ENCODE measurements at regions of chr7 and their contacts with region 1.

Region 1: GRCh38 chr7:55572378-55573233 is at the start of gene VOPP1:
- DNase-seq: peak in 4 of 10 donors; percentile 35 to 74 (median 61)
- H3K4me3 ChIP-seq: peak within 1 kb of the TSS; percentile 70 to 95 (median 87)
- H3K27ac ChIP-seq: peak within 1 kb of the TSS; percentile 45 to 94 (median 86)
- H3K27me3 ChIP-seq: no peaks in the 10 kb centered on the region
- CTCF ChIP-seq: peak in 1 of 56 donors; percentile 7
- total RNA-seq, gene VOPP1: 43.2 to 95.6 (median 64.3) TPM

Region 2: GRCh38 chr7:55360486-55360885 is 212.1 kb before region 1 on chr7:
- intact Hi-C with region 1: loop called in 1 of 2 experiments (anchors 5 kb)
- DNase-seq: no peak
- H3K4me3 ChIP-seq: no peak overlapping the region
- H3K27ac ChIP-seq: no peak overlapping the region
- H3K27me3 ChIP-seq: no peaks in the 10 kb centered on the region
- CTCF ChIP-seq: no peak

Region 3: GRCh38 chr7:55432939-55433784 is 139.4 kb before region 1 on chr7:
- intact Hi-C with region 1: loop called in 1 of 2 experiments (anchors 10 kb)
- DNase-seq: no peak
- H3K4me3 ChIP-seq: no peak overlapping the region
- H3K27ac ChIP-seq: peak overlapping the region in 10 of 59 donors; percentile 20 to 52 (median 35)
- H3K27me3 ChIP-seq: no peaks in the 10 kb centered on the region
- CTCF ChIP-seq: peak in 49 of 56 donors; percentile 13 to 64 (median 43)

Region 4: DNA sequence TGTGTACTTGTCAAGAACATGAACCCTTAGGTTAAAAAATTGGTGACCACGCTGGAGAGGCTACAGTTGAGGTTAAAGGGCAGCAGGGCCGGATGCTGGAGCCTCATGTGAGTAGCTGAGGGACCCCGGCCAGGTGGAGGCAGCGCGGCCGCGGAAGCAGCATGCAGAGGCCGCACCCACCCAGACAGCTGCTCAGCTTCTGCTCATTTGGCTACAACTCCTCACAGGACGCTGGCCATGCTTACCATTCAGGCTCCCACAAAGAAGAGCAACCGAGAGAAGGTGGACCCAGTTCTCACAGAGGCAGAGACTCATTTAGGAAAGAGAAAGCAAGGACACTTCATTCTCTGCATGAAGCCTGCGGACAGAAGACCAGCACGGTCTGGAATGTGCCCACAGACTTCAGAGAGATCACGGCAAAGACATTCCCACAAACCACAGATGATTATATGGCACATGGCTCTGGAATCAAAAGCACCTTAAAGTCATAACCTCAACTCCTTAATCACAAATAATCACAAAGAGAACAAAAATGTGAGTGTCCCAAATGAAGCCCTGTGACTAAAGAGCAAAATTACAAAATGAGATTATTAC is 94.7 kb before region 1 on chr7:
- intact Hi-C with region 1: no loop called
- DNase-seq: no peak
- H3K4me3 ChIP-seq: no peak overlapping the region
- H3K27ac ChIP-seq: no peak overlapping the region
- H3K27me3 ChIP-seq: no peaks in the 10 kb centered on the region
- CTCF ChIP-seq: no peak

Region 5: GRCh38 chr7:55524558-55525310 is 47.9 kb before region 1 on chr7:
- intact Hi-C with region 1: loop called in 1 of 2 experiments (anchors 5 kb)
- DNase-seq: peak in 1 of 10 donors; percentile 41
- H3K4me3 ChIP-seq: no peak overlapping the region
- H3K27ac ChIP-seq: peak overlapping the region in 5 of 59 donors; percentile 7 to 35 (median 21)
- H3K27me3 ChIP-seq: no peaks in the 10 kb centered on the region
- CTCF ChIP-seq: peak in 7 of 56 donors; percentile 8 to 25 (median 11)

Region 6: DNA sequence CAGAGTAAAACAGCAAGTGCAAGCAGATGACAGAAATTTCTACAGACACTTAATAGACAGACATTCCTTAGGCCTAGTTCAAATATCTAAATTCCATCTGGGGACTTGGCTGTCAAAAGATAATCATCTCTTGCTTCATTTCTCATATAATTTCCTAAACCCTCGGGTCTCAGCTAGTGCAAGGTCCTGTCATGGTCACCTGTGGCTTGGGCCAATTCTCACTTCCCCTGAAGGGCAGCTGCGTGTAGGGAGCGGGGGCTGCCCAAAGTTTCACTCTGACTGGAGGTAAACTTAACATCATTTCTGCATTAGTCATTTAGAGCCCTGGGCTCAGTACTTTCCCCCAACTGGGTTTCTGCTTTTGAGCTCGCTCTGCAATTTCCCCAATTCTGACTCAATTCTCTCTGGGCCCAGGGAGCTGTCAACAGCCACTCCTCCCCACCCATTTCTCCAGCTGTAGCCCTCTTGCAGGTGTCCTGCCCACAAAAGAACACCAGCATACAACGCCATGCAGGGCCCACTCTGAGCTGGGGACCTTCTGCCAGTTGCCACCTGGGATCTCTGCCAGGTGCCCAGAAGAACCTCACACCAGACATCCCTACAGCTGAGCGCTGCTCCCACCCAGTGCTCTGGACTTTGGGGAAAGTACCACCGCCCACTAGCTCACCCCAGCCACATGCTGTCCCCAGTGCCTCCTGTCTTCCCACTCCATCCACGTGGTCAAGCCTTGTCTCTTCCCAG is 38.3 kb before region 1 on chr7:
- intact Hi-C with region 1: loop called in 1 of 2 experiments (anchors 5 kb)
- DNase-seq: peak in 2 of 10 donors; percentile 35 to 56
- H3K4me3 ChIP-seq: no peak overlapping the region
- H3K27ac ChIP-seq: peak overlapping the region in 44 of 59 donors; percentile 2 to 84 (median 52)
- H3K27me3 ChIP-seq: no peaks in the 10 kb centered on the region
- CTCF ChIP-seq: no peak

Region 7: DNA sequence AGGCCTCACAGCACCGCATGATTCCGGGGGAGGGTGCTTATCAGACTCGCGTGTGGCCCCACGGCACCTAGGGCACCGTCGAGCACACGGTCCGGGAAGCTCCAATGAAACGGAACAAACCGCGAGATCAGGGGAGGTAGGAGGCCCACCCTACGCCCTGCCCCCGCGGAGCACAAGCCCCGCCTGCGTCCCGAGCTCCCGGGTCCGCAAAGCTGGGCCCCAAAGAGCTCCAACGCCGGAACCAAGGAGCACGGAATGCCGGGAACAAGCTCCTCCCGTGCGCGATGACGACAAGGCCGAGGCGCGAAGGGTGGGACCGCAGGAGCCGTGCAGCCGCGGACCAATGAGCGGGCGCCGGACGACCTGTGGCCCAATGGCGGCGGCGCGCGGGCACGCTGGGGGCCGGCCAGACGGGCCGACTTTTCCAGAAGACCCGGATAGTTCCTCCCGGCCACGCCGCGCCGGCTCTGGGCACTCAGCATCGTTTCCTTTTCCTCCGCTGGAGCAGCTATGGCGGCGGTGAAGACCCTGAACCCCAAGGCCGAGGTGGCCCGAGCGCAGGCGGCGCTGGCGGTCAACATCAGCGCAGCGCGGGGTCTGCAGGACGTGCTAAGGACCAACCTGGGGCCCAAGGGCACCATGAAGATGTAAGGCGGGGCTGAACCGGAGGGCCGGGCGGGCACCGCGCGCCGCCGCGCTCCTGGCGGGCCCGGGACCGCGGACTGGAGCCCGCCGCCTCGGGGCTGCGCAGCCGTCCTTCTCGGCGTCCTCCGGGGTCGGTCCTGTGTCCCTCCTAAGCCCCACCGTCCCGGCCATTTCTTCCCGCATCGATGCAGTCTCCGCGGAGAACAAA is 479.0 kb after region 1 on chr7 and contains the starts of genes CCT6A and PSPH:
- intact Hi-C with region 1: loop called in 1 of 2 experiments (anchors 10 kb)
- DNase-seq: peak; percentile 96 to 100 (median 98)
- H3K4me3 ChIP-seq: peak within 1 kb of the TSS; percentile 63 to 100 (median 91)
- H3K27ac ChIP-seq: peak within 1 kb of the TSS; percentile 19 to 98 (median 92)
- H3K27me3 ChIP-seq: no peaks in the 10 kb centered on the region
- CTCF ChIP-seq: peak in 35 of 56 donors; percentile 6 to 58 (median 22)
- total RNA-seq, gene CCT6A: 38.3 to 105 (median 76.0) TPM
- total RNA-seq, gene PSPH: 11.1 to 44.3 (median 20.0) TPM

Measured in dorsolateral prefrontal cortex (tissue), 120 donors.